Caco-2 (cell line): ENCODE measurements at regions of chr15 and their contacts with region 1.

Region 1: DNA sequence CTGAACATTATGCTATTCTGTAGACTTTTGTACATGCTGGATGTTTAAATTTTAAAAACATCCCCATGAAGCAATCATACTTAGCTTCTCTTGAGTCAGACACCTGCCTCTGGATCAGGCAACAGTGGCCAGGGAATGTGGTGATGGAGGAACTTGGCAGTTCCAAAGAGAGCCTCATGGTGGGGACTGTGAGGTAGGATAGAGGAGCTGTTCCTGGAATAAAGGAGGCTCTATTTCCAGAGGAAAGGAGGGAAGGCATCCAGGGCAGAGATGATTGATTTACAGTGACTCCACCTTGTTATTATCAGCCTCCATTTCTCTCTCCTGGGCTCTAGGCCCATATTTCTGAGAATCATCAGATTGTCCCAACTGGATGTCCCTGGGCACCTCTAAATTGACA is 35.0 kb upstream of the ABHD17C start:
- DNase-seq: peak; percentile 61 to 63
- H3K4me3 ChIP-seq: no peak overlapping the region
- H3K4me3 Mint-ChIP-seq: no peak overlapping the region
- H3K27ac Mint-ChIP-seq: no peak overlapping the region
- H3K4me1 ChIP-seq: peaks cover 10% of the 10 kb centered on the region
- H3K4me1 Mint-ChIP-seq: peaks cover 6% of the 10 kb centered on the region
- H3K27me3 ChIP-seq: no peaks in the 10 kb centered on the region
- H3K27me3 Mint-ChIP-seq: no peaks in the 10 kb centered on the region
- CTCF ChIP-seq: peak; percentile 59 to 68

Region 2: GRCh38 chr15:80343554-80343992 is 316.5 kb before region 1 on chr15:
- CTCF ChIA-PET with region 1: no interaction called
- POLR2A ChIA-PET with region 1: no interaction called
- intact Hi-C with region 1: no loop called
- DNase-seq: no peak
- H3K4me3 ChIP-seq: no peak overlapping the region
- H3K4me3 Mint-ChIP-seq: no peak overlapping the region
- H3K27ac Mint-ChIP-seq: no peak overlapping the region
- H3K4me1 ChIP-seq: no peaks in the 10 kb centered on the region
- H3K4me1 Mint-ChIP-seq: no peaks in the 10 kb centered on the region
- H3K27me3 ChIP-seq: no peaks in the 10 kb centered on the region
- H3K27me3 Mint-ChIP-seq: peaks cover 34% of the 10 kb centered on the region
- CTCF ChIP-seq: no peak

Region 3: DNA sequence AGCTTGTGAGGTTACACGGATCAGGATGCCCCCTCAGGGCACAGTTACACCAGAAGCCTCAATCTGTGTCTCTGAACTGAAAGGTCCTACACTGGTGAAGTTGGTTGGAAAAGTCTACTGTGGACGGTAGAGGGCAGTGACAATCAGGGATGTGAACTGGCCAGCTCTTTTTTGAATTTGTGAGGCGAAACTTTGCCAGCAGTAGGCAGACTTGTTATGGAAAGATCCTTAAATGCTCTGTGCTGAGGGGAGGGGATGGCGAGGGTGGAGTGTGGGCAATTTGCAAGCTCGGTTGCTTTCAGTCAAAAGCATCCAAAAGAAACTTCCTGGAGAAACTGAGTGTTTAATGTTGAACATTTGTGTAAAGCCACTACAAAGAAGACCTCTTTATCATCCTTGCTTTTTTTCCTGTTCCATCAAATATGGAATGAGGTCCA is 92.4 kb before region 1 on chr15:
- CTCF ChIA-PET with region 1: interaction called, 7 read pairs
- POLR2A ChIA-PET with region 1: no interaction called
- intact Hi-C with region 1: loop called (anchors 1 kb)
- DNase-seq: peak; percentile 50 to 65
- H3K4me3 ChIP-seq: no peak overlapping the region
- H3K4me3 Mint-ChIP-seq: no peak overlapping the region
- H3K27ac Mint-ChIP-seq: no peak overlapping the region
- H3K4me1 ChIP-seq: no peaks in the 10 kb centered on the region
- H3K4me1 Mint-ChIP-seq: no peaks in the 10 kb centered on the region
- H3K27me3 ChIP-seq: no peaks in the 10 kb centered on the region
- H3K27me3 Mint-ChIP-seq: peaks cover 17% of the 10 kb centered on the region
- CTCF ChIP-seq: peak; percentile 67 to 84

Region 4: DNA sequence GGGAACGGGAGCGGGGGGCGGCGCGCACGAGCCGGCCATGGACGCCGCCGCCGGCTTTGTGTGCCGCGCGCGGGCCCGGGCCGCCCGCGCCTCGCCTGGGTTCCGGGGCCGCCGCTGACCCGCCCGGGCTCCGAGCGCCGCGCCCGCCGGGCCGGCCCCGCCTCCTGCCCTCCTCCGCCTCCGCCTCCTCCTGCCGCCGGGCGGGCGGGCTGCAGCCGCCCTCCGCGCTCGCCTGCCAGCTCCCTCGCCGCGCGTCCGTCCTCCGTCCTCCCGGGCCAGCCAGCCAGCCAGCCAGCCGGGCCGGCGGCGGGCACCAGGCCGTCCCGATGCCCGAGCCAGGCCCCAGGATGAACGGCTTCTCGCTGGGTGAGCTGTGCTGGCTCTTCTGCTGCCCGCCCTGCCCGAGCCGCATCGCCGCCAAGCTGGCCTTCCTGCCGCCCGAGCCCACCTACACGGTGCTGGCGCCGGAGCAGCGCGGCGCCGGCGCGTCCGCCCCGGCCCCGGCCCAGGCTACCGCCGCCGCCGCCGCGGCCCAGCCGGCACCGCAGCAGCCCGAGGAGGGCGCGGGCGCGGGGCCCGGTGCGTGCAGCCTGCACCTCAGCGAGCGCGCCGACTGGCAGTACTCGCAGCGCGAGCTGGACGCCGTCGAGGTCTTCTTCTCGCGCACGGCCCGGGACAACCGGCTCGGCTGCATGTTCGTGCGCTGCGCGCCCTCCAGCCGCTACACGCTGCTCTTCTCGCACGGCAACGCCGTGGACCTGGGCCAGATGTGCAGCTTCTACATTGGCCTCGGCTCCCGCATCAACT is 35.2 kb after region 1 on chr15 and contains the start of gene ABHD17C:
- CTCF ChIA-PET with region 1: interaction called, 5 read pairs
- POLR2A ChIA-PET with region 1: no interaction called
- intact Hi-C with region 1: loop called (anchors 2 kb)
- DNase-seq: peak; percentile 43 to 73
- H3K4me3 ChIP-seq: peak within 1 kb of the TSS; percentile 86
- H3K4me3 Mint-ChIP-seq: peak within 1 kb of the TSS; percentile 86
- H3K27ac Mint-ChIP-seq: peak within 1 kb of the TSS; percentile 63
- H3K4me1 ChIP-seq: peaks cover 15% of the 10 kb centered on the region
- H3K4me1 Mint-ChIP-seq: peaks cover 23% of the 10 kb centered on the region
- H3K27me3 ChIP-seq: no peaks in the 10 kb centered on the region
- H3K27me3 Mint-ChIP-seq: no peaks in the 10 kb centered on the region
- CTCF ChIP-seq: no peak
- total RNA-seq, gene ABHD17C: 19.2 and 25.0 TPM in 2 replicates

Region 5: GRCh38 chr15:80721476-80721875 is 61.4 kb after region 1 on chr15:
- CTCF ChIA-PET with region 1: no interaction called
- POLR2A ChIA-PET with region 1: no interaction called
- intact Hi-C with region 1: no loop called
- DNase-seq: no peak
- H3K4me3 ChIP-seq: no peak overlapping the region
- H3K4me3 Mint-ChIP-seq: no peak overlapping the region
- H3K27ac Mint-ChIP-seq: no peak overlapping the region
- H3K4me1 ChIP-seq: peaks cover under 1% of the 10 kb centered on the region; the same call in 1 of the 2 replicates
- H3K4me1 Mint-ChIP-seq: peaks cover 5% of the 10 kb centered on the region
- H3K27me3 ChIP-seq: no peaks in the 10 kb centered on the region
- H3K27me3 Mint-ChIP-seq: no peaks in the 10 kb centered on the region
- CTCF ChIP-seq: no peak

Region 6: GRCh38 chr15:80970018-80970658 is 310.0 kb after region 1 on chr15:
- CTCF ChIA-PET with region 1: interaction called, 3 read pairs
- POLR2A ChIA-PET with region 1: no interaction called
- intact Hi-C with region 1: loop called (anchors 1 kb)
- DNase-seq: peak in 1 of 2 experiments; percentile 77
- H3K4me3 ChIP-seq: no peak overlapping the region
- H3K4me3 Mint-ChIP-seq: no peak overlapping the region
- H3K27ac Mint-ChIP-seq: no peak overlapping the region
- H3K4me1 ChIP-seq: peaks cover 21% of the 10 kb centered on the region
- H3K4me1 Mint-ChIP-seq: peaks cover 14% of the 10 kb centered on the region
- H3K27me3 ChIP-seq: no peaks in the 10 kb centered on the region
- H3K27me3 Mint-ChIP-seq: no peaks in the 10 kb centered on the region
- CTCF ChIP-seq: peak; percentile 59 to 85